AG04449 (cell line): ENCODE measurements at regions of chr1 and their contacts with region 1.

Region 1: DNA sequence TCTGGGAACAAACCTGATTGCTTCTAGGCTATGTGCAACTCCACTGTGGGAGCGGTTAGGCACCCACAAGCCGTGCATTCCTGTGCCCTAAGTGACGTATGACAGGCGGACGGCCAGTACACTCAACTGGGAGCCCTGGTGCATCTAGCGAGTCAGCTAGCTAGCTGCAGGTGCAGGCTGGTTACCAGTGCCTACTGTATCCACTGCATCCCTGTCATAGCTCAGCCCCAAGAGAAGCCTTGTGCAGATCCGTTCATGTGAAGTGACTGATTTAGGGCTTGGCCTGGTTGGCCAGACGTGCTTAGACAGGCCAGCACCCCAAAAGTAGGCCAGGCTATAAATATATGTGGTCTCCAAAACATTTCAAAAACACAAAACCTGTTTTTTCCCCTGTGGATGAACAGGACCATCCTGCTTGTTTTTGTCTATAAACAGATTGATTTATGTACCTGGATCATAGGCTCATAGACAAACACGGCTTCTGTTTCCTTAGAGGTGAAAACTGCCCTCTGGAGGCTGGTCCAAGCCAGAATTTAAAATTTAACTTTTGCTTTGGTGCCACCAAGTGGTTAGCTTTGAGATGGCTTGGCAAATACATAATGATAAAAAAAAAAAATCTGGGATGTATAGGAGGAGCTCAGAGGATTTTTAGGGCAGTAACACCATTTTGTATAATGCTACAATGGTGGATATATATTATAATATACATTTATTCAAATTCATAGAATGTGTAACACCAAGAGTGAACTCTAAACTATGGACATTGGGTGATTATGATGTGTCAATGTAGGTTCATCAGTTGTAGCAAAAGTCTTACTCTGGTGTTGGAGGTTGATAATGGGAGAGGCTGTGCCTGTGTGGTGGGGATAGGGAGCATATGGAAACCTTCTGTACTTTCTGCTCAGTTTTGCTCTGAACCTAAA is 68.5 kb downstream of the GIPC2 start:
- DNase-seq: peak; percentile 19
- H3K4me3 ChIP-seq: no peak overlapping the region
- CTCF ChIP-seq: peak; percentile 71

Region 2: DNA sequence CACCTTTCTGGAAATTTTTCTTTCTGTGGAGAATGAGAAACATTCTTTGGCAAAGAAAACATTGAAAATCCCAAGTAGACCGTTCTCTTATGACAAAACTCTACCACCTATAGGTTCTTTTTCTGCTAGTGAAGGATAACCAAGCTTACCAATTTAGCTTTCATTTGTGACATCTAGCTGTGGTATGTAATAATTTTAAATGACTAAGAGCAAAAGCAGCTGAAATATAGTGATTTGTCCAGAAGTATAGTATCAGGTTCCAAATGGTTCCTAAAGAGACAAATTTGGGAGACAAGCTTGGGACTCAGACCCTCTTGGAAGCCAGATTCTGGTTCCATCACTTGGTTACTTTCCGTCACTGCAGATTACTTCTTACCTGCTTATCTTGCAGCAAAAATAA is 159.8 kb before region 1 on chr1:
- CTCF ChIA-PET with region 1: interaction called, 18 read pairs
- POLR2A ChIA-PET with region 1: no interaction called
- DNase-seq: no peak
- H3K4me3 ChIP-seq: no peak overlapping the region
- CTCF ChIP-seq: no peak

Region 3: GRCh38 chr1:77978969-77979876 is 135.1 kb before region 1 on chr1 and contains the start of gene FUBP1:
- CTCF ChIA-PET with region 1: interaction called, 43 read pairs
- POLR2A ChIA-PET with region 1: interaction called, 3 read pairs
- DNase-seq: peak; percentile 96
- H3K4me3 ChIP-seq: peak within 1 kb of the TSS; percentile 95
- CTCF ChIP-seq: peak; percentile 78

Region 4: GRCh38 chr1:78004719-78005447 is 109.4 kb before region 1 on chr1 and contains the start of gene DNAJB4:
- CTCF ChIA-PET with region 1: interaction called, 59 read pairs
- POLR2A ChIA-PET with region 1: interaction called, 22 read pairs
- DNase-seq: peak; percentile 92
- H3K4me3 ChIP-seq: peak within 1 kb of the TSS; percentile 61
- CTCF ChIP-seq: no peak

Region 5: DNA sequence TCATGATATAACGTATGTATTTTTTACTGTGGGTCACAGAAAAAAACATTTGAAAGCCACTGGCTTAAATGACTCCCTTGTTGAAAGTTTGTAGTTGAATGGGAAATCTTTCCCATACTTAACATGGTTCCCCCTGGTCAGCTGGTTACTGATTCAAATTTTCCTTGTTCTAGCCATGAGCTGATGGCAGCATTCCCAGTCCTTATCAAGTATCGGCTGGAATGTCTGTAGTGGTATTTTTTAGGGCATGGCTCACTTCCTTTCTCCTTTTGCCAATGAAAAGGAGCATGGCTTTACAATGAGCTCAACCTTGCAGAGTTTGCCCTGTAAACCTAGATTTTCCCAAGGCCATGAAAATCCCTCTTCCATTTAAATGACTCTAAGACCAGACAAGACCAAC is 12.8 kb before region 1 on chr1:
- CTCF ChIA-PET with region 1: interaction called, 53 read pairs
- POLR2A ChIA-PET with region 1: interaction called, 5 read pairs
- DNase-seq: peak; percentile 89
- H3K4me3 ChIP-seq: no peak overlapping the region
- CTCF ChIP-seq: no peak

Region 6: GRCh38 chr1:78464449-78464891 is 350.2 kb after region 1 on chr1:
- CTCF ChIA-PET with region 1: no interaction called
- POLR2A ChIA-PET with region 1: no interaction called
- DNase-seq: no peak
- H3K4me3 ChIP-seq: no peak overlapping the region
- CTCF ChIP-seq: no peak